ENCODE measurements at regions of chr1 and their contacts with region 1.

Region 1: DNA sequence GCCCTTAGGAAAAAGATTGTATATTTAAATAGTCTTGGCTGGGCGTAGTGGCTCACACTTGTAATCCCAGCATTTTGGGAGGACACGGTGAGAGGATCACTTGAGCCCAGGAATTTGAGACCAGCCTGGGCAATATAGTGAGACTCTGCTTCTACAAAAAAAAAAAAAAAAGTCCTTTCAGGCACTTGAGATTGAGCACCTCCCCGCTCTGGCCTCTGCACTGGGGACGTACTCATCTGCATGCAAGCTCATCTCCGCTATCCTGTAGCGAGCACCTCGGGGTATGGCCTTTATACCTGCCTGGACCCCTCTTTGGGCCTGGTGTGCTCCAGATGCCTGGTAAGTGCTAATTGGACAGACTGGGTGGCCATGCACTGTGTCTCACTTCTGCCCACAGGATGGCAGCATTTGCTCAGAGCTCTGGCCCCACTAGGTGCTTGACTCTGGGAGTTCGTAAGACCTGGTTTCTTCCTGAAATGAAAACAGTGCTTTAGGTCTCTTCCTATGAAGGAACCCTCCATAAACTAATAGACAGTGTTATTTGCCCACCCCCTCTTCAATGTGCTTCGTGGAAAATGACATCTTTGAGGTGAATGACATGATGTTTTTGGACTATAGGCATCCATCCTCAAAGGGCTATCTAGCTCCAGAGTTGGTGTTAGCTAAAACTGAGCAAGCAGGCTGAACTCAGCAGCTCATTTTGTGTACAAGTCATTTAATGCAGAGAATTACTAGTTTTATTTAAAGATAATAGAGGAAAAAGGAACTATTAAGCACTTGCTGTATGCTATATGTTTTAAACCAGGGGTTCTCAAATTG is 61.7 kb upstream of the ADAR start:
- DNase-seq: peak; percentile 57
- H3K4me3 ChIP-seq: no peak overlapping the region
- H3K27ac ChIP-seq: no peak overlapping the region
- H3K4me1 ChIP-seq: no peaks in the 10 kb centered on the region
- H3K27me3 ChIP-seq: no peaks in the 10 kb centered on the region
- CTCF ChIP-seq: peak; percentile 89 to 93

Region 2: GRCh38 chr1:153958111-153958960 is 711.3 kb before region 1 on chr1 and contains the start of gene CRTC2:
- CTCF ChIA-PET with region 1: no interaction called
- dilution Hi-C with region 1: no loop called
- in situ Hi-C with region 1: no loop called
- intact Hi-C with region 1: no loop called
- DNase-seq: peak; percentile 97
- H3K4me3 ChIP-seq: peak within 1 kb of the TSS; percentile 76 to 92 (median 87)
- H3K27ac ChIP-seq: peak within 1 kb of the TSS; percentile 75
- H3K4me1 ChIP-seq: peaks cover 30% of the 10 kb centered on the region
- H3K27me3 ChIP-seq: no peaks in the 10 kb centered on the region
- CTCF ChIP-seq: no peak
- total RNA-seq, gene CRTC2: 6.0 to 31.7 TPM

Region 3: GRCh38 chr1:154584267-154584994 is 85.2 kb before region 1 on chr1:
- CTCF ChIA-PET with region 1: no interaction called
- dilution Hi-C with region 1: no loop called
- in situ Hi-C with region 1: no loop called
- intact Hi-C with region 1: no loop called
- DNase-seq: no peak
- H3K4me3 ChIP-seq: no peak overlapping the region
- H3K27ac ChIP-seq: no peak overlapping the region
- H3K4me1 ChIP-seq: no peaks in the 10 kb centered on the region
- H3K27me3 ChIP-seq: no peaks in the 10 kb centered on the region
- CTCF ChIP-seq: no peak

Region 4: DNA sequence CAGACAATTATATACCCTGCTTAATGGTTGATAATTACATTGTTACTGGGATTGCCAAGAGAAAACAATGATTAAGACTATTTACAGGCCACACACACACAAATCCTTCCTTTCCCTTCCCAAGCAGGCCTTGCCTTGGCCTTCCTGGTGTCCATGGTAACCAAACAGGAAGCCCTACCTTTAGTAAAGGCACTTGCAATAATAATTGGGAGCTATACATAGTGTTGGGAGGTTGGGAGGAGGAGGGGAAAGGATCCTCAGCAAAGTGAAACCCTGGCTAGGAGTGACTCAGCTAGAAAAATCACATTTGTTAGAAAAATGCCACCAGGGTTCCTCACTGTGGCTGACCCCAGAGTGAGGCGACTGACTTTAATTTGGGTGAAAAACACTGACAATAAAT is 60.6 kb after region 1 on chr1:
- CTCF ChIA-PET with region 1: no interaction called
- dilution Hi-C with region 1: no loop called
- in situ Hi-C with region 1: loop called in 1 of 2 experiments (anchors 10 kb)
- intact Hi-C with region 1: no loop called
- DNase-seq: peak; percentile 77
- H3K4me3 ChIP-seq: no peak overlapping the region
- H3K27ac ChIP-seq: peak overlapping the region; percentile 26
- H3K4me1 ChIP-seq: peaks cover 9% of the 10 kb centered on the region
- H3K27me3 ChIP-seq: no peaks in the 10 kb centered on the region
- CTCF ChIP-seq: no peak

Region 5: DNA sequence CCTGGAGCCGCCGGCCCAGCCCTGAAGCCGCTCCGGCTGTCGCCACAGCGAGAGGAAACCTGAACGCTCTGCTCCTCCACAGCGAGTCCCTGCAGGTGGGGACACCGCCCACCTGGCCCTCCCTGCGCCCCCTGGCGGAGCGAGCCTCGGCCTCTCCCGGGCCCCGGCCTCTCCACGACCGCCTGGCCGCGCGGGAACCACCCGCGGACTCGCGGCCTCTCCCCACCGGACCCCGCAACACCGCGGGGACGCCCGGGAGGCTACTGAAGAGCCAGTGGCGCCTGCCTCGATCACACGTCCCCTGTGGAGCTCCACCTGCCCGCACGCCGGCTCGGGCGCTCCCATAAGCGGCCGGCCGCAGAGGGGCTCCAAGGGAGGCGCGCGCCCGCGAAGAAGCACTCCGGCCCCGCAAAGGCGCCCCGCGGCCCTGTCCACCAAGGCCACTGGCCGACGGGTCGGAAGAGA is 90.8 kb after region 1 on chr1:
- CTCF ChIA-PET with region 1: interaction called, 4 read pairs
- dilution Hi-C with region 1: no loop called
- in situ Hi-C with region 1: no loop called
- intact Hi-C with region 1: loop called (anchors 1 kb)
- DNase-seq: peak; percentile 30
- H3K4me3 ChIP-seq: peak overlapping the region; percentile 32 to 37 (median 33)
- H3K27ac ChIP-seq: no peak overlapping the region
- H3K4me1 ChIP-seq: peaks cover 8% of the 10 kb centered on the region
- H3K27me3 ChIP-seq: no peaks in the 10 kb centered on the region
- CTCF ChIP-seq: peak; percentile 39 to 68

Region 6: GRCh38 chr1:154878371-154879022 is 208.8 kb after region 1 on chr1:
- CTCF ChIA-PET with region 1: interaction called, 7 read pairs
- dilution Hi-C with region 1: no loop called
- in situ Hi-C with region 1: loop called (anchors 5 to 10 kb)
- intact Hi-C with region 1: loop called (anchors 1 kb)
- DNase-seq: peak; percentile 36
- H3K4me3 ChIP-seq: no peak overlapping the region
- H3K27ac ChIP-seq: no peak overlapping the region
- H3K4me1 ChIP-seq: no peaks in the 10 kb centered on the region
- H3K27me3 ChIP-seq: no peaks in the 10 kb centered on the region
- CTCF ChIP-seq: peak; percentile 78 to 85

Region 7: GRCh38 chr1:154896771-154897391 is 227.2 kb after region 1 on chr1:
- CTCF ChIA-PET with region 1: interaction called, 11 read pairs
- dilution Hi-C with region 1: no loop called
- in situ Hi-C with region 1: no loop called
- intact Hi-C with region 1: no loop called
- DNase-seq: no peak
- H3K4me3 ChIP-seq: no peak overlapping the region
- H3K27ac ChIP-seq: no peak overlapping the region
- H3K4me1 ChIP-seq: no peaks in the 10 kb centered on the region
- H3K27me3 ChIP-seq: no peaks in the 10 kb centered on the region
- CTCF ChIP-seq: no peak

Measured in mammary epithelial cell (primary cell).